CD14-positive monocyte (primary cell): ENCODE measurements at regions of chr2 and their contacts with region 1.

Region 1: GRCh38 chr2:219543601-219544358 is at the starts of genes CHPF and TMEM198:
- DNase-seq: peak; percentile 87 to 94 (median 90)
- H3K4me3 ChIP-seq: peak within 1 kb of the TSS; percentile 32 to 76 (median 56)
- H3K4me3 Mint-ChIP-seq: peak within 1 kb of the TSS; percentile 78 to 87
- H3K27ac ChIP-seq: no peak within 1 kb of the TSS
- H3K27ac Mint-ChIP-seq: peak within 1 kb of the TSS in 3 of 7 donors; percentile 36 to 73 (median 53)
- H3K4me1 ChIP-seq: peaks cover 21 to 27% of the 10 kb centered on the region in 2 donors
- H3K4me1 Mint-ChIP-seq: peaks cover 9% of the 10 kb centered on the region
- H3K27me3 ChIP-seq: peaks cover 24 to 51% of the 10 kb centered on the region in 2 donors
- H3K27me3 Mint-ChIP-seq: peaks cover 38 to 63% (median 40%) of the 10 kb centered on the region in 3 donors
- CTCF ChIP-seq: no peak
- polyA plus RNA-seq, gene CHPF: 0.09 to 0.32 (median 0.09) TPM
- polyA plus RNA-seq, gene TMEM198: not detected

Region 2: GRCh38 chr2:219335373-219335786 is 208.4 kb before region 1 on chr2:
- intact Hi-C with region 1: no loop called
- DNase-seq: no peak
- H3K4me3 ChIP-seq: no peak overlapping the region
- H3K4me3 Mint-ChIP-seq: no peak overlapping the region
- H3K27ac ChIP-seq: no peak overlapping the region
- H3K27ac Mint-ChIP-seq: no peak overlapping the region
- H3K4me1 ChIP-seq: no peaks in the 10 kb centered on the region
- H3K4me1 Mint-ChIP-seq: no peaks in the 10 kb centered on the region
- H3K27me3 ChIP-seq: peaks cover 32 to 46% of the 10 kb centered on the region in 2 donors
- H3K27me3 Mint-ChIP-seq: peaks cover 45 to 68% (median 61%) of the 10 kb centered on the region in 3 donors
- CTCF ChIP-seq: no peak

Region 3: DNA sequence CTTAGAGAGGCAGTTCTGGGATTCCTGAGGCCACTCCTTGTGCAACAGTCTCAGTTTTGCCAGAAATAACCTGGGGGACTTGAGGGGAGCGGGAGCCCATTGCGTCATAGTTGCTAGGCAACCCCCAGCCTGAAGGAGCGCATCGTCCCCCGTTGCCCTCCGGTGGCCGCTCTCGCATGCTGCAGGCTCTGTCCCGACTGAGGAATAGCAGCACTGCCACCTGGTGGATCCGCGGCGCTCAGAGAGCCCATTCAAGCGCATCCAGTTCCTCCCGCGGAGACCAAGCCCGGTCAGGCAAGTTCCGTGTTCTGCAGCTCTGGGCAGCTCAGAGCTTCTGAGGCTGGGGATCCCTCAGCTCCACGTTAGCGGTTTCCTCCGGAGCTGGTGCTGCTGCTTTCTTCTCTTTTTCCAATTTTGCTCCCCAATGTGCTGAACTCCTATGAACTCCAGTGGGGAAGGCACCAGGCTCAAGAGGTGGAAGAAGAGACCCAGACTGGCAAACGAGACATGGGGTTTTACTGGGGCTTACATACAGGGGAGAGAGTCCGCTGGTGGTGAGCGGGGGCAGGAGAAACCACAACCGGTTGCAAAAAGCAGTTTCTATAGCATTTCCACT is 98.8 kb after region 1 on chr2:
- intact Hi-C with region 1: loop called (anchors 2 kb)
- DNase-seq: peak; percentile 92 to 96 (median 93)
- H3K4me3 ChIP-seq: no peak overlapping the region
- H3K4me3 Mint-ChIP-seq: peak overlapping the region in 1 of 2 donors; percentile 19
- H3K27ac ChIP-seq: no peak overlapping the region
- H3K27ac Mint-ChIP-seq: peak overlapping the region in 2 of 7 donors; percentile 62 to 78
- H3K4me1 ChIP-seq: peaks cover 6 to 9% of the 10 kb centered on the region in 2 donors
- H3K4me1 Mint-ChIP-seq: peaks cover 13% of the 10 kb centered on the region
- H3K27me3 ChIP-seq: no peaks in the 10 kb centered on the region
- H3K27me3 Mint-ChIP-seq: peaks cover 8 to 17% (median 14%) of the 10 kb centered on the region in 3 donors
- CTCF ChIP-seq: peak; percentile 99

Region 4: DNA sequence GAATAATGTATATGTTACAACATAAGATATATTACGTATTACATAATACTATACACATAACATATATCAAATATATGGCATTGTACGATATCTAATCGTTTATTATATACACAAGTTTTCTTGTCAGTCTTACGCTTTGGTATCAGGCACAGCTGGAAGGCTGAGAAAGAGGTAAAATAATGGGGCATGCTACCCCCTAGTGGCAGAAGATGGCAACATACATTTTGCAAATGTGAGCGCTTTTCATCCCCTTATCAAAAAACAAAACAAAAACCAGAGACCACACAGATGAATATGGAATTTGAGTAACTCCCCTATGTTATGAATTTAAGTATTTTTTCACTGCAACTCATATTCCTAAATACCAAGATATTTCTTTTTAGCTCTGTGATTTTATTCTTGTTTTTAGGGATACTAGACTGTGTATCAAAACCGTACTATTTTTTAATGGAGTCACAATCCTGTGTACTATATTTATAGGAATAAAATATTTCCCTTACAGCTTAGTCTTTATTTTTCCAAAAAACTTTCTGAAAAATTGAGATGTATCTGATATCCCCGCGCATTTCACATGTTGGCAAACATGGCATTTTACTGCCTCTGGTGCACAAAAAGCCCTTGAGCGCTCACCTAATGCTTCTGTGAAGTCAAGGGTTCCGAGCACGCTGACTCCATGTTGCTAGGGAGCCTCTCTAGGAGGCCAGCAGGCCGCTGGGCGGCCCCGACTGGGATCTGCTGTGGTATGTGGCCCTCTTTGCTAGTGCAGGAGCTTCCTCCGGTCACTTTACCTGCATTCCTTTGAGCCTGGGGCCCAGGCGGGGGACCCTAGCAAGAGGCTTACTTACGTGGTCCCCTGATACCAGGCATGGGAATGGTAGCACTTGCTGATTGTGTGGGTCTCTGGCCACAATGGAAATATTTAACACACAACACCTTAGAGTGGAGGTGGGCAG is 146.2 kb after region 1 on chr2:
- intact Hi-C with region 1: loop called in 1 of 2 experiments (anchors 5 kb)
- DNase-seq: peak; percentile 8 to 26 (median 14)
- H3K4me3 ChIP-seq: no peak overlapping the region
- H3K4me3 Mint-ChIP-seq: peak overlapping the region in 1 of 2 donors; percentile 43
- H3K27ac ChIP-seq: no peak overlapping the region
- H3K27ac Mint-ChIP-seq: no peak overlapping the region
- H3K4me1 ChIP-seq: no peaks in the 10 kb centered on the region
- H3K4me1 Mint-ChIP-seq: peaks cover 5% of the 10 kb centered on the region
- H3K27me3 ChIP-seq: peaks cover 0 to 3% of the 10 kb centered on the region in 2 donors
- H3K27me3 Mint-ChIP-seq: peaks cover 12 to 24% (median 15%) of the 10 kb centered on the region in 3 donors
- CTCF ChIP-seq: peak; percentile 81